Mammary epithelial cell (primary cell): ENCODE measurements at regions of chr22 and their contacts with region 1.

Region 1: GRCh38 chr22:17243524-17243923 is 24.3 kb upstream of the ADA2 start:
- DNase-seq: peak; percentile 35
- H3K4me3 ChIP-seq: no peak overlapping the region
- H3K27ac ChIP-seq: no peak overlapping the region
- H3K4me1 ChIP-seq: no peaks in the 10 kb centered on the region
- H3K27me3 ChIP-seq: no peaks in the 10 kb centered on the region
- CTCF ChIP-seq: no peak

Region 2: GRCh38 chr22:17284888-17285287 is 41.4 kb after region 1 on chr22:
- CTCF ChIA-PET with region 1: no interaction called
- dilution Hi-C with region 1: loop called (anchors 5 kb)
- in situ Hi-C with region 1: no loop called
- intact Hi-C with region 1: no loop called
- DNase-seq: no peak
- H3K4me3 ChIP-seq: no peak overlapping the region
- H3K27ac ChIP-seq: no peak overlapping the region
- H3K4me1 ChIP-seq: no peaks in the 10 kb centered on the region
- H3K27me3 ChIP-seq: no peaks in the 10 kb centered on the region
- CTCF ChIP-seq: no peak

Region 3: GRCh38 chr22:17381237-17381914 is 137.9 kb after region 1 on chr22:
- CTCF ChIA-PET with region 1: no interaction called
- dilution Hi-C with region 1: loop called (anchors 25 kb)
- in situ Hi-C with region 1: no loop called
- intact Hi-C with region 1: no loop called
- DNase-seq: no peak
- H3K4me3 ChIP-seq: no peak overlapping the region
- H3K27ac ChIP-seq: no peak overlapping the region
- H3K4me1 ChIP-seq: no peaks in the 10 kb centered on the region
- H3K27me3 ChIP-seq: no peaks in the 10 kb centered on the region
- CTCF ChIP-seq: no peak